ENCODE measurements at regions of chr7 and their contacts with region 1.

Region 1: GRCh38 chr7:33932832-33933468 is 27.6 kb downstream of the BMPER start:
- DNase-seq: peak; percentile 38 to 75
- H3K4me3 ChIP-seq: no peak overlapping the region
- H3K4me1 ChIP-seq: no peaks in the 10 kb centered on the region
- H3K27me3 ChIP-seq: no peaks in the 10 kb centered on the region

Region 2: DNA sequence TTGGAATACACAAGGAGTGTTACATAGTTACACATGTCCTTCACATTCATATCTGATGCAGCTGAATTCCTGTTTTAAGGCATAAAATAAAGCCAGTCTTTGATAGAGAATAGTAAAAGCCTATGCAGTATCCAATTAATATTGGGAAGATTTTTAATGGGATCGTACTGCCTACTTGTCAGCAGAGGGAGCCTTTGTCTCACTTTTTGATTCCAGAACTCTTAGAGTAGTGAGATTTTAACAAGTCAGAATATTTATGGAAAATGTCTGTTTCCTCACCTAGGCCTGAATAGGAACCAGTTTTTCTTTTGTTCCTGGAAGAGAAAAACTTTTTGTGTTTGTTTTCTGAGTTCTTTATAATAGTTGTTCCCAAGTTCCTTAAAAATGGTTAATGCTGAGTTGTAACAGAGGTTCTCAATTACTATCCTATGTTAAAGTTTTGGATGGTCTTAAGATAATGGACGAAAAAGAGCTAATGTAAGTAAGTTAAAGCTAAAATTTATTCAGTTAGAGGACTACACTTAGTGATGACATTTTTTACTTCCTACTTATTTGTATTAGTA is 689.5 kb before region 1 on chr7:
- in situ Hi-C with region 1: loop called (anchors 25 kb)
- DNase-seq: peak in 1 of 2 experiments; percentile 61
- H3K4me3 ChIP-seq: no peak overlapping the region
- H3K4me1 ChIP-seq: no peaks in the 10 kb centered on the region; the same call in 1 of the 2 replicates
- H3K27me3 ChIP-seq: peaks cover 3% of the 10 kb centered on the region; the same call in 1 of the 2 replicates

Measured in HAP-1 (cell line).